ENCODE measurements at regions of chr5 and their contacts with region 1.

Region 1: DNA sequence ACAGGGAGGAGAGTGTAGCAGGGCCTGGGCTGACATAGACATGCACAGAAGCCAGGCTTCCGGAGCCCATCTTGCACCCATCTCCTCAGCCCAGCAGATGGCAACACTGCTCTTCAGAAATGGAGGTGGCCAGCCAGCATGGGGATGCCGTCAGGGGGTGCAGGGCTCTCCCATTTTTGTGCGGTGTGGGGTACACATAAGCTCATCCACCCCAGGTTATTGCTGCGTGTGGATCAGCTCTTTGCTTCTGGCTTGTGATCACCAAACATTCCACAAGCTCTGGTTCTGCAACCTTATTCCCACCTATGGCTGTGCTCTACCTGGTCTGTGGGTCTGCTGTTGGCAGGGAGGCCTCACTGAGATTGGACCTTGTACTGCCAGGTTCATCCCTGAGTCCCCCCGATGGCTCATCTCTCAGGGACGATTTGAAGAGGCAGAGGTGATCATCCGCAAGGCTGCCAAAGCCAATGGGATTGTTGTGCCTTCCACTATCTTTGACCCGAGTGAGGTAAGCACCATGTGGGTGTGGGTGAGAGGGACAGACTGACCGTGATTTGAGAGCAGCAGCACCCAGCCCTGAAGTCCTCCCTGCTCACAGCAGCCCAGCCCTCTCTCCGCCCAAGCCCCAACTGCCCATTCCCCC is 17.3 kb downstream of the SLC22A5 start:
- DNase-seq: peak; percentile 60 to 81 (median 74)
- ATAC-seq: peak; percentile 88
- H3K4me3 ChIP-seq: no peak overlapping the region
- H3K4me3 Mint-ChIP-seq: peak overlapping the region in 3 of 10 donors; percentile 7 to 47 (median 22)
- H3K27ac ChIP-seq: no peak overlapping the region
- H3K27ac Mint-ChIP-seq: peak overlapping the region; percentile 1 to 83 (median 41)
- H3K4me1 ChIP-seq: peaks cover 15 to 19% of the 10 kb centered on the region in 2 donors
- H3K4me1 Mint-ChIP-seq: peaks cover 20 to 55% (median 29%) of the 10 kb centered on the region in 7 donors
- H3K27me3 ChIP-seq: no peaks in the 10 kb centered on the region
- H3K27me3 Mint-ChIP-seq: no peaks in the 10 kb centered on the region

Region 2: DNA sequence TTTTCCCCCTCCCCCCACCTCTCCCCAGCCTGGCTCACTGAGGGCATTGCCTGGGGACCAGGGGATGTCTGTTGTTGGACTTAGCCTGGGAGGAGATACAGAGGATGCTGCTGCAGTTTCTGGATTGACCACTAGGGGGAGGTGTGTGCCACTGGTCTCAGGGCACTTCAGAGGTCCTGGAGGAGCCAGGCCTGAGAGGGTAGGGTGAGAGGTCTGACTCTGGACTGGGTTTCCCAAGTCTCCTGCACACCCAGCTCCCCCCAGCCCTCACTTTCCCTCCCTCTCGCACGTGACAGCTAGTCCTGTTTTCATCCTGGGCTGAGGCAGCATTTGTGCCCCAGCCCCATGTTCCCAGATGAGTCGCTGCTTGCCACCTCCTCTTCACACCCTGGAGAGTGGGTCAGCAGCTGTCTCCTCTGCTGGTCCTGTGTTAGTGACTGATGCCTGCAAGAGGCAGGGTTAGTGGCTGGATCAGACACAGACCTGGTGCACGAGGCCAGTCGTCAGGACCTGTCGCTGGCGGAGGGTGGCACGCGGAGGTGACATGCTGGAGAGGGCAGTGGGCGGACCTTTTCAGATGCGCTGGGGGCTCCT is 321.9 kb before region 1 on chr5:
- CTCF ChIA-PET with region 1: no interaction called
- POLR2A ChIA-PET with region 1: no interaction called
- intact Hi-C with region 1: loop called in 1 of 2 experiments (anchors 5 kb)
- DNase-seq: peak; percentile 40 to 82 (median 64)
- ATAC-seq: peak; percentile 80
- H3K4me3 ChIP-seq: no peak overlapping the region
- H3K4me3 Mint-ChIP-seq: no peak overlapping the region
- H3K27ac ChIP-seq: no peak overlapping the region
- H3K27ac Mint-ChIP-seq: peak overlapping the region in 2 of 9 donors; percentile 30 to 79
- H3K4me1 ChIP-seq: peaks cover 0 to 9% of the 10 kb centered on the region in 2 donors
- H3K4me1 Mint-ChIP-seq: peaks cover 0 to 62% (median 5%) of the 10 kb centered on the region in 7 donors
- H3K27me3 ChIP-seq: no peaks in the 10 kb centered on the region
- H3K27me3 Mint-ChIP-seq: peaks cover 0 to 7% (median 0%) of the 10 kb centered on the region in 5 donors

Region 3: DNA sequence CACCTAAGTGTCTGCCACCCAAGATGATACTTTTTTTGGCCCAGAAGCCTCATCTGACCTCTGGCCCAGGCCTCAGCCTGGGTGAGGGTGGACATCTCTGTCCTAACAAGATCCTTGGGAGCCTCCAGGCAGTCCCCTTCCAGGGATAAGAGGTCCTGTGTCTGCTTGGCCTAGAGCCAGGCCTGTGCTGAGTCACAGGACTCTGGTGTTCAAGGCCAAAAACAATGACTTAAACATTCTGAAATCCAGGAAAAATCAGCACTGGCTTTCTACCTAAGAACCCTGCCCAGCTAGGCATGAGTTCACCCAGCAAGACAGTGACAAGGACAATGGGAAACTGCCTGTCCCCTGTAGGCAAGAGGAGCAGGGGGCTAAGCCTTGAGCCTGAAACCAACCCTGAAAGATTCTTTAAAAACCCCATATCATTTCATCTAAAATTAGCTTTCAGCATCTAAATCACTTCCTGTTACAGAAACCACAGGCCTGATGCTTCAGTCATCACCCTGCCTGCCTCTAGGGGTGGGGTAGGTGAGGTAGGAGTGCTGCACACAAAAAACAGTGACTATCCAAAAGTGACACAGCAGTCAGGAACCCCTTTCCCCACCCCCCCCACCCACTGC is 283.3 kb before region 1 on chr5:
- CTCF ChIA-PET with region 1: no interaction called
- POLR2A ChIA-PET with region 1: no interaction called
- intact Hi-C with region 1: no loop called
- DNase-seq: peak in 8 of 9 donors; percentile 49 to 82 (median 72)
- ATAC-seq: peak; percentile 92
- H3K4me3 ChIP-seq: peak overlapping the region; percentile 0
- H3K4me3 Mint-ChIP-seq: peak overlapping the region in 9 of 10 donors; percentile 16 to 74 (median 56)
- H3K27ac ChIP-seq: no peak overlapping the region
- H3K27ac Mint-ChIP-seq: peak overlapping the region in 8 of 9 donors; percentile 14 to 86 (median 64)
- H3K4me1 ChIP-seq: peaks cover 40 to 72% of the 10 kb centered on the region in 2 donors
- H3K4me1 Mint-ChIP-seq: peaks cover 42 to 86% (median 51%) of the 10 kb centered on the region in 7 donors
- H3K27me3 ChIP-seq: no peaks in the 10 kb centered on the region
- H3K27me3 Mint-ChIP-seq: no peaks in the 10 kb centered on the region

Region 4: DNA sequence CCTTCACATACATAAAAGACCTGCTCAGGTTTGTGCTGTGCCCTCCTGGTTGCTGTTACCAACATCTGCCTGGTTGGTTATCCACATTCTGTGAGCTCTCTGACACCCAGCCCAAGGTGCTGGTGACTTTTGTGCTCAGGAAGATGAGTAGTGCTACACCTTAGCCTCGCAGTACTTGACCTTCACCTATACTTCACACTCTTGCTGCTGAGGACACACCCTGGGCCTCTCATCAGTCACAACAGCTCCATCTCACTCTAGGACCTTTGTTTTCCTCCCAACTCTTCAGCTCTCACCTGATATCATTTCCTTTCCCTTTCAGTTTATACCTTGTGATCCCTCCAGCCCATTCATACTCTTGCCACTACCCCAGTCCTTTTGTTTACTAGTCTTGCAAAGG is 28.0 kb before region 1 on chr5:
- CTCF ChIA-PET with region 1: no interaction called
- POLR2A ChIA-PET with region 1: no interaction called
- intact Hi-C with region 1: no loop called
- DNase-seq: no peak
- ATAC-seq: no peak
- H3K4me3 ChIP-seq: no peak overlapping the region
- H3K4me3 Mint-ChIP-seq: no peak overlapping the region
- H3K27ac ChIP-seq: no peak overlapping the region
- H3K27ac Mint-ChIP-seq: no peak overlapping the region
- H3K4me1 ChIP-seq: no peaks in the 10 kb centered on the region
- H3K4me1 Mint-ChIP-seq: peaks cover 0 to 7% (median 0%) of the 10 kb centered on the region in 7 donors
- H3K27me3 ChIP-seq: no peaks in the 10 kb centered on the region
- H3K27me3 Mint-ChIP-seq: peaks cover 0 to 2% (median 0%) of the 10 kb centered on the region in 5 donors

Region 5: DNA sequence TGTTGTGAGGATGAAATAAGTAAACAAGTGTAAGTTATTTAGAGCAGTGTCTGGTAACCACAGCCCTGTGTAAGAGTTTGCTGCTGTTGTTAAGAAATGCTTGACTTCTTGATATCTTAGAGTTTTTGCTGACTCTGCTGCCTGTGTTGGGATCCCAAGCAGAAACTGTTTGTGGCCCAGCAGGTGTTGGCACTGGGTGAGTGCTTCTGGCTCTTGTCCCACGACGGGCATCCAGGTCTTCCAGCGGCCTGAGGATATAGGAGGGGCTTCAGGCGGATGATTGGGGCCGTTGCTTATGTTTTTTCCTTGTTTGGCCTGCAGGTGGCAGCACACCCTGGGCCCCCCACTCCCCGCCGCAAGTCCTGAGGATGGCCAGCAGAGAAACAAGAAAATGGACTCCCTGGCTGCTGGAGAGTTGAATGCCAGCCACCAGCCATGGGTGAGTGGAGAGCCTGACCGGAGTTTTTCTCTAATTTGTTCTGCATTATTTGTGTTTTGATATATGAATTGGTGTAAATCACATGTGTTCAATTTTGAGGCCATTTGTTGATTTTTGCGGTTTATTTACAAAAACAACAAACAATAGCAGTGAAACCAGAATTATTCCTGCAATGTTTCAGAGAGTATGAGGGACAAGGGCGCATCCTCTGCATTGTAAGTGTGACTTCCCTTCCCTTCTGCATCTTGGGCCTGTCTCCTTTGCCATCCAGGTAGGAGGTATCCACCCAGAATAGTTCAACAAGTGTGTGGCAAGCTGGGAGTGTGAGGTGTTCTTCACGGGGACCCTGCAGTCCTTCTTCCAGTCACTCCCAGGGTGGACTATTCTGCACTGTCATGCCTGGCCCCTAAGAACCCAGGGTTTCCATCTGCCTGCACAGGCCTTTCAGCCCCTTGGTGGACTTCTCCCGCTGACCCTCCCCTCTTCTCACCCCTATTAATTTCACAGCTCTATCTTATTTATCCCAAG is 33.0 kb after region 1 on chr5:
- CTCF ChIA-PET with region 1: interaction called, 10 read pairs
- POLR2A ChIA-PET with region 1: interaction called, 7 read pairs
- intact Hi-C with region 1: loop called in 1 of 2 experiments (anchors 2 kb)
- DNase-seq: peak; percentile 42 to 72 (median 55)
- ATAC-seq: peak; percentile 84
- H3K4me3 ChIP-seq: peak overlapping the region; percentile 12
- H3K4me3 Mint-ChIP-seq: peak overlapping the region; percentile 54 to 88 (median 76)
- H3K27ac ChIP-seq: peak overlapping the region; percentile 77
- H3K27ac Mint-ChIP-seq: peak overlapping the region; percentile 79 to 99 (median 97)
- H3K4me1 ChIP-seq: peaks cover 71 to 92% of the 10 kb centered on the region in 2 donors
- H3K4me1 Mint-ChIP-seq: peaks cover 77 to 98% (median 95%) of the 10 kb centered on the region in 7 donors
- H3K27me3 ChIP-seq: no peaks in the 10 kb centered on the region
- H3K27me3 Mint-ChIP-seq: no peaks in the 10 kb centered on the region

Region 6: DNA sequence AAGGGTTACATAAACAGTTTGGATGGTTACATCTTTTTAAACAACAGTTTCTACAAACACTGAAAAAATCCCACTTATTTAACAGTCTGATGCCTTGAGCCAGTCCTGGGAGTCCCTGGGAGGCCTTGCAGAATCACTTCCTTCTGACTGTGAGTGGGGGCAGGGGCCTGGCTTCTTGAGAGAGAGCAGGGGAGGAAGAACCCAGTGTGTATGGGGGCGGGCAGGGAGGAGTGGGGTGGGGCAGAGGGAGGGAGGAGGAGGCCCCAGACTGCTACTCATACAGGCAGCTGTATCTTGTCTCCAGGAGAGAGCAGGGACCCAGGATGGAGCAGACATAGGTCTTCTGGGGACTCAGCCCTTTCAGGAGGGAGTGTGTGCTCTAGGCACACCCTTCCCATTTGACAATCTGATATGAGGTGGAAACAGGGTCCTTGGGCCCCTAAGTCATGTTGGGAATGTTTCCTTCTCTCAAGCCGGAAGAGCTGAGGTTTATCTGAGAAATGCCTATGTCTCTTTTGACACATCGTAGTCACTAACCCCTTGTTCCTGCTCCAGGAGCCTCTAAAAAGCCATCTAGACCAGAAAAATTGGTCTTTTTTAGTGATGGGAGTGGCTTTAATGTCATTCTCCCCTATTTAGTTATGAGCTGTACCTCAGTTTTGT is 51.0 kb after region 1 on chr5:
- CTCF ChIA-PET with region 1: no interaction called
- POLR2A ChIA-PET with region 1: no interaction called
- intact Hi-C with region 1: no loop called
- DNase-seq: peak in 8 of 9 donors; percentile 36 to 66 (median 56)
- ATAC-seq: peak; percentile 88
- H3K4me3 ChIP-seq: peak overlapping the region; percentile 25
- H3K4me3 Mint-ChIP-seq: peak overlapping the region; percentile 60 to 79 (median 68)
- H3K27ac ChIP-seq: peak overlapping the region; percentile 67
- H3K27ac Mint-ChIP-seq: peak overlapping the region; percentile 79 to 93 (median 85)
- H3K4me1 ChIP-seq: peaks cover 61 to 86% of the 10 kb centered on the region in 2 donors
- H3K4me1 Mint-ChIP-seq: peaks cover 68 to 96% (median 83%) of the 10 kb centered on the region in 7 donors
- H3K27me3 ChIP-seq: no peaks in the 10 kb centered on the region
- H3K27me3 Mint-ChIP-seq: no peaks in the 10 kb centered on the region

Region 7: GRCh38 chr5:132495667-132496190 is 109.0 kb after region 1 on chr5:
- CTCF ChIA-PET with region 1: interaction called, 243 read pairs
- POLR2A ChIA-PET with region 1: interaction called, 122 read pairs
- intact Hi-C with region 1: no loop called
- DNase-seq: peak in 7 of 9 donors; percentile 42 to 79 (median 54)
- ATAC-seq: peak; percentile 48
- H3K4me3 ChIP-seq: peak overlapping the region; percentile 91
- H3K4me3 Mint-ChIP-seq: peak overlapping the region; percentile 86 to 99 (median 97)
- H3K27ac ChIP-seq: peak overlapping the region; percentile 99
- H3K27ac Mint-ChIP-seq: peak overlapping the region; percentile 90 to 99 (median 97)
- H3K4me1 ChIP-seq: peaks cover 48 to 57% of the 10 kb centered on the region in 2 donors
- H3K4me1 Mint-ChIP-seq: peaks cover 36 to 79% (median 68%) of the 10 kb centered on the region in 7 donors
- H3K27me3 ChIP-seq: no peaks in the 10 kb centered on the region
- H3K27me3 Mint-ChIP-seq: no peaks in the 10 kb centered on the region

Region 8: DNA sequence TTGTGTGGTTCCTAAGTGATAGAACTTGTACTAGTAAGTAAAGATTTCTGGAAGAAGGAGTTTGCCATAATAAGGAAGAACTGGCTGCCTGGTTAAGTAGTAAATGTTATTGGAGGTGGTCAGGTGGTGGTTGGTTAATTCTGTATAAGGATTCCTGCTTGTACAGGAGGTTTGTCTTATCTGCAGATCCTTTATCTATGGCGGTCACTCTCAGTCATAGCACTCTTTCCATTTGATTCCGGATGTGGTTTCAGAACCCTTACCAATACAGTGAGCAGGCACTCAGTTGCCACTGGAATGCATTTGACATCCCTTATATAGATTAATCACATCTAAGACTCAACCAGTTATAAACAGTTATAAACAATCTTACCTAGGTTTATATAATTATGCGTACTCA is 220.3 kb after region 1 on chr5:
- CTCF ChIA-PET with region 1: no interaction called
- POLR2A ChIA-PET with region 1: no interaction called
- intact Hi-C with region 1: no loop called
- DNase-seq: no peak
- ATAC-seq: no peak
- H3K4me3 ChIP-seq: no peak overlapping the region
- H3K4me3 Mint-ChIP-seq: no peak overlapping the region
- H3K27ac ChIP-seq: no peak overlapping the region
- H3K27ac Mint-ChIP-seq: no peak overlapping the region
- H3K4me1 ChIP-seq: no peaks in the 10 kb centered on the region
- H3K4me1 Mint-ChIP-seq: peaks cover 0 to 4% (median 0%) of the 10 kb centered on the region in 7 donors
- H3K27me3 ChIP-seq: no peaks in the 10 kb centered on the region
- H3K27me3 Mint-ChIP-seq: no peaks in the 10 kb centered on the region

Region 9: GRCh38 chr5:132714456-132715307 is 327.9 kb after region 1 on chr5:
- CTCF ChIA-PET with region 1: interaction called, 3 read pairs
- POLR2A ChIA-PET with region 1: no interaction called
- intact Hi-C with region 1: loop called (anchors 1 to 2 kb)
- DNase-seq: peak in 5 of 9 donors; percentile 6 to 23 (median 14)
- ATAC-seq: peak; percentile 34
- H3K4me3 ChIP-seq: no peak overlapping the region
- H3K4me3 Mint-ChIP-seq: peak overlapping the region in 6 of 10 donors; percentile 28 to 70 (median 46)
- H3K27ac ChIP-seq: no peak overlapping the region
- H3K27ac Mint-ChIP-seq: peak overlapping the region in 3 of 9 donors; percentile 22 to 78 (median 60)
- H3K4me1 ChIP-seq: no peaks in the 10 kb centered on the region
- H3K4me1 Mint-ChIP-seq: peaks cover 0 to 20% (median 9%) of the 10 kb centered on the region in 7 donors
- H3K27me3 ChIP-seq: no peaks in the 10 kb centered on the region
- H3K27me3 Mint-ChIP-seq: no peaks in the 10 kb centered on the region

Region 10: GRCh38 chr5:132883261-132883834 is 496.6 kb after region 1 on chr5:
- CTCF ChIA-PET with region 1: no interaction called
- POLR2A ChIA-PET with region 1: no interaction called
- intact Hi-C with region 1: loop called (anchors 1 kb)
- DNase-seq: peak in 6 of 9 donors; percentile 12 to 31 (median 19)
- ATAC-seq: peak; percentile 86
- H3K4me3 ChIP-seq: no peak overlapping the region
- H3K4me3 Mint-ChIP-seq: no peak overlapping the region
- H3K27ac ChIP-seq: no peak overlapping the region
- H3K27ac Mint-ChIP-seq: peak overlapping the region in 5 of 9 donors; percentile 0 to 73 (median 52)
- H3K4me1 ChIP-seq: no peaks in the 10 kb centered on the region
- H3K4me1 Mint-ChIP-seq: peaks cover 0 to 8% (median 0%) of the 10 kb centered on the region in 7 donors
- H3K27me3 ChIP-seq: no peaks in the 10 kb centered on the region
- H3K27me3 Mint-ChIP-seq: no peaks in the 10 kb centered on the region